Head of caudate nucleus (tissue), 42 donors: ENCODE measurements at regions of chr6 and their contacts with region 1.

Region 1: GRCh38 chr6:5203546-5203945 is 57.2 kb downstream of the LYRM4 start:
- DNase-seq: peak in 12 of 42 donors; percentile 13 to 60 (median 37)

Region 2: DNA sequence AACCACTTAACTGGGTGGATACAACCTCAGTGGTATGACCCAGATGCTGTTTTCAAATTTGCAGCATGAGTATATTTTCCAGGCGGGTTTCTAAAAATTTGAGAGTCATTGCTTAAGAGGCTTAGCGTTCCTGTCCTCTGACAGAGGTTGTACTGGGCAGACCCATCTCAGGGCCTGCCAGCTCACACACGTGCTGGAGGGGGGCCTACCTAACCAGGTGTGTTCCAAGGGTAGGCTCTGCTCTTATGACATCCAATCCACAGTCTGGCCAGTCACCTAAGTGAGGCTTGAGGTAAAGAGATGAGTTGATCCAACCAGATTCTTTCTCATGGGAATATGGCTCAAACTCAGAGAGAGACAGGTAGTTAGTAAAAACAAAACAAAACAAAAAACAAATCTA is 55.9 kb after region 1 on chr6:
- intact Hi-C with region 1: loop called (anchors 2 kb)
- DNase-seq: no peak